ENCODE measurements at regions of chr1 and their contacts with region 1.

Region 1: GRCh38 chr1:101025657-101026504 is at the start of gene DPH5:
- DNase-seq: peak; percentile 84
- H3K4me3 Mint-ChIP-seq: peak within 1 kb of the TSS; percentile 93
- H3K27ac Mint-ChIP-seq: peak within 1 kb of the TSS; percentile 87
- H3K4me1 Mint-ChIP-seq: peaks cover 58% of the 10 kb centered on the region
- H3K27me3 Mint-ChIP-seq: no peaks in the 10 kb centered on the region
- total RNA-seq, gene DPH5: 31.7 and 32.2 TPM in 2 replicates

Region 2: DNA sequence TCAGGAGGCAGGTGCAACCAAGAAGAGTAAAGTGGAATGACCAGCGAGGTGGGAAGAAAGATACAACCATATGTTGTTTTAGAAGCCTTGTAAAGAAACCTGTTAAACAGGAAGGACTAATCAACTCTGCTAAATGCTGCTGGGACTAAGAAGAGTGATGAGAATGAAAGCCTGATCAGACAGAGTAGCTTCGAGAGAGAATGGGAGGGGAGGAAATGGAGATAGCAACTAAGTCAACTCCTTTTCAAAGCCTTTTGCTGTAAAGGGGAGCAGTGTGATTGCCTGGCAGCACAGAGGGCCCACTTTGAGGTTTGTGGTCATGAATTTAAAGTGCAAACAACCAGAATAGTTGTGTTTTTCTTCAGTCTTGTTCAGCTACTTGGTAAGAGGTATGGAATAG is 98.6 kb before region 1 on chr1:
- intact Hi-C with region 1: loop called (anchors 2 kb)
- DNase-seq: peak; percentile 48
- H3K4me3 Mint-ChIP-seq: no peak overlapping the region
- H3K27ac Mint-ChIP-seq: no peak overlapping the region
- H3K4me1 Mint-ChIP-seq: peaks cover 47% of the 10 kb centered on the region
- H3K27me3 Mint-ChIP-seq: no peaks in the 10 kb centered on the region

Region 3: DNA sequence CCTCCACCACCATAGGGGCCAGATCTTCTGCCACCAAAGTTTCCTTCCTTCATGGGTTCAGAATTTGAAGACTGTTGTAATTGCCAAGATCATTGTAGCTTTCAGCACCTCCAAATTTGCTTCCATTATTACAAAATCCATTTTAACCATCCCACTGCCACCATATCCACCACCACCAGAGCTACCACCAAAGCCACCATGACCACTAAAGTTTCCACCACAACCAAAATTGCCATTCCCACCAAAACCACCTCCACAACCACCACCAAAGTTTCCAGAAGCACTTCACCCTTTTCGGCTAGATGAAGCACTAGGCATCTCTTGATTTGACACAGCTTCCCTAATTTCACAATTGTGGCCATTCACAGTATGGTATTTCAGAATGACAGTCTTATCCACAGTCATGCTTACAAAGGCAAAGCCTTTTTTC is 84.8 kb before region 1 on chr1:
- intact Hi-C with region 1: loop called (anchors 5 kb)
- DNase-seq: peak; percentile 17
- H3K4me3 Mint-ChIP-seq: peak overlapping the region; percentile 58
- H3K27ac Mint-ChIP-seq: peak overlapping the region; percentile 99
- H3K4me1 Mint-ChIP-seq: peaks cover 37% of the 10 kb centered on the region
- H3K27me3 Mint-ChIP-seq: peaks cover 3% of the 10 kb centered on the region

Region 4: DNA sequence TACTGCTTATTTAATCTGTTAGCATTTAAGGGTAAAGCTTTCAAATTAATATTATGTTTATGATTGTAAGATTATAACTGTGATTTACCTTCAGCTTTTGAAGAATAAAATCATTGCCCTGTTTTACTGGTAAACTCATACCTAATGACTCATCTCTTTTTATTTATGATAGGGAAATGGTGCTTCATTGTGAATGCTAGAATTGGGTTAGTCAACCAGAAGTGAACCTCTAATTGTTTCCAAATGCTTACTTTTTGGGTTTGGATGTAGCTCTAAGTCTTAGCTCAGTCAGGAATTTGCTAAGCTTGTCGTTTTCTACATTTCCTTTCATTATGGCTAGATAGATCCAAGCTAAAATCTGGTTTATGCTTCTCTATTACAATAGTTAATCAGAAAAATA is 70.6 kb before region 1 on chr1:
- intact Hi-C with region 1: no loop called
- DNase-seq: no peak
- H3K4me3 Mint-ChIP-seq: no peak overlapping the region
- H3K27ac Mint-ChIP-seq: no peak overlapping the region
- H3K4me1 Mint-ChIP-seq: peaks cover 40% of the 10 kb centered on the region
- H3K27me3 Mint-ChIP-seq: no peaks in the 10 kb centered on the region